Naive thymus-derived CD4-positive, alpha-beta T cell (primary cell): ENCODE measurements at regions of chr4 and their contacts with region 1.

Region 1: DNA sequence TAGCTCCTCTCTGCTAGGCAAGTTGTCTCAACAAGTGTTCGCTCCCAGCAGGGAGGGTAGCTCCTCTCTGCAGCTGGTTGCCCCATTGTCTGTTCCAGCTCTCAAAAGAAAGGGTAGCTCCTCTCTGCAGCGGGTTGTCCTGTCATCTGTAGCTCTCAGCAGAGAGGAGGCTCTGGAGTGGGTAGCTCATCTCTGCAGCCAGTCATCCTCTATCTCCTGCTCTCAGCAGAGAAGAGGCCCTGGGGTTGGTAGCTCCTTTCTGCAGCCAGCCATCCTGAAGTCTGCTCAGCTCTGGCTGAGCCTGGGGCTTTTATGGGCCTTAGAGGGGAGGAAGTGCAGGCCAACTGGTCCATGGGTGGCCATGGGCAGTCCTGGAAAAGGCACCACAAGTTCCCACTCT is 342.7 kb downstream of the PTTG2 start:
- DNase-seq: no peak
- ATAC-seq: no peak
- H3K4me3 ChIP-seq: no peak overlapping the region
- H3K4me3 Mint-ChIP-seq: no peak overlapping the region
- H3K27ac ChIP-seq: no peak overlapping the region
- H3K27ac Mint-ChIP-seq: no peak overlapping the region
- H3K4me1 ChIP-seq: peaks cover 0 to 5% of the 10 kb centered on the region in 2 donors
- H3K4me1 Mint-ChIP-seq: peaks cover 8 to 22% (median 17%) of the 10 kb centered on the region in 7 donors
- H3K27me3 ChIP-seq: no peaks in the 10 kb centered on the region
- H3K27me3 Mint-ChIP-seq: peaks cover 0 to 7% (median 0%) of the 10 kb centered on the region in 5 donors

Region 2: DNA sequence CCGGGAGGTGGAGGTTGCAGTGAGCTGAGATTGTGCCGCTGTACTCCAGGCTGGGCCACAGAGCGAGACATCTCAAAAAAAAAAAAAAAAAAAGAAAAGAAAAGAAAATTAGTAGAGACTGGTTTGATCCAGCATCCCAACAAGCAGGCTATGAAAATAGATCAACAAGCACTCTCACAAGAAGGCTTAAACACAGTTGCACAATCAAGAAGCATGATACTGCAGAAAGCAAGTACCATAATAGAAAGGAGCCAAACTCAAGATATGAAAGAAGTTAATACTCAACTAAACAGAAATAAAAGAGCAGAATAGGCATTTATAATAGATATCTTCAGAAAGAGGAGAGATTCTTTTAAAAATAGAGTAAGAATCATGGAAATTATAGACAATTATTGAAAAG is 543.1 kb after region 1 on chr4:
- CTCF ChIA-PET with region 1: no interaction called
- POLR2A ChIA-PET with region 1: no interaction called
- intact Hi-C with region 1: loop called in 1 of 2 experiments (anchors 5 kb)
- DNase-seq: no peak
- ATAC-seq: no peak
- H3K4me3 ChIP-seq: no peak overlapping the region
- H3K4me3 Mint-ChIP-seq: no peak overlapping the region
- H3K27ac ChIP-seq: no peak overlapping the region
- H3K27ac Mint-ChIP-seq: peak overlapping the region in 1 of 9 donors; percentile 25
- H3K4me1 ChIP-seq: no peaks in the 10 kb centered on the region
- H3K4me1 Mint-ChIP-seq: peaks cover 0 to 2% (median 0%) of the 10 kb centered on the region in 7 donors
- H3K27me3 ChIP-seq: no peaks in the 10 kb centered on the region
- H3K27me3 Mint-ChIP-seq: peaks cover 0 to 8% (median 0%) of the 10 kb centered on the region in 5 donors